H1 (cell line): ENCODE measurements at regions of chr6 and their contacts with region 1.

Region 1: DNA sequence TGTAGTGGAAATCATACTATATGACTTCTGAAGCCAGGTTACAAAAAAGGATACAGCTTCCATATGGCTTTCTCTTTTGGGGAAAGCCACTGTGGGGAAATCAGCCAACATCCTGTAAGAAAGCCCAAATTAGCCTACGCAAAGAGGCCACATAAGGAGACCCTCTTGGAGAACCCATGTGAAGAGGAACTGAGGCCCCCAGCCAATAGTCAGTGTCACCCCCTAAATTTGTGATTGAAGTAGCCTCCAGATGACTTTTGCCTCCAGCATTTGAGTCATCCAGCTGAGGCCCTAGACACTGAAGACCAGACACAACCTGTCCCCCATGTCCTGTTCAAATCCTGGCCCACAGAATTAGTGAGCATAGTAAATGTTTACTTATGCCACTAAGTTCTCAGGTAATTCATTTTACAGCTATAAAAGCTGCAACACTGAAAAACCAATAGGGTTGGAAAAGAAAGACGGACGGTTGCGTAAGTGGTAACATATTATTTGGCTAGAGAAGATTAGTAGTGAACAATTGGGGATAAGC is 60.4 kb downstream of the HMGCLL1 start:
- DNase-seq: no peak
- H3K4me3 ChIP-seq: no peak overlapping the region
- H3K27ac ChIP-seq: no peak overlapping the region
- H3K4me1 ChIP-seq: no peaks in the 10 kb centered on the region
- H3K27me3 ChIP-seq: no peaks in the 10 kb centered on the region
- CTCF ChIP-seq: no peak
- EP300 ChIP-seq: no peak
- POLR2A ChIP-seq: no peak
- RAD21 ChIP-seq: no peak

Region 2: DNA sequence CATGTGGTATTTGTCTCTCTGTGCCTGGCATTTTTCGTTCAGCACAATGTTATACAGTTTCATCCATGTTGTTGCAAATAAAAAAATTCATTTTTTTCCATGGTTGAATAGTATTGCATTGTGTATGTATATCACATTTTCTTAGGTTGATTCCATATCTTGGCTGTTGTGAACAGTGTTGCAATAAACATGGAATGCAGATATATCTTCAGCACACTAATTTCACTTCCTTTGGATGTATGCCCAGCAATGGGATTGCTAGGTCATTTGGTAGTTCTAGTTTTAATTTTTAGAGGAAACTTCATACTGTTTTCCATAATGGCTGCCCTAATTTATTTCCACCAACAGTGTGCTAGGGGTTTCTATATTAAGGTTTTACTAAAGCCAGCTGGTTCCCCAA is 138.7 kb before region 1 on chr6:
- CTCF ChIA-PET with region 1: no interaction called
- POLR2A ChIA-PET with region 1: no interaction called
- DNase-seq: no peak
- H3K4me3 ChIP-seq: no peak overlapping the region
- H3K27ac ChIP-seq: no peak overlapping the region
- H3K4me1 ChIP-seq: no peaks in the 10 kb centered on the region
- H3K27me3 ChIP-seq: no peaks in the 10 kb centered on the region
- CTCF ChIP-seq: no peak
- EP300 ChIP-seq: no peak
- POLR2A ChIP-seq: no peak
- RAD21 ChIP-seq: no peak

Region 3: GRCh38 chr6:55528621-55529020 is 10.0 kb after region 1 on chr6:
- CTCF ChIA-PET with region 1: interaction called, 20 read pairs
- POLR2A ChIA-PET with region 1: no interaction called
- DNase-seq: no peak
- H3K4me3 ChIP-seq: no peak overlapping the region
- H3K27ac ChIP-seq: no peak overlapping the region
- H3K4me1 ChIP-seq: no peaks in the 10 kb centered on the region
- H3K27me3 ChIP-seq: no peaks in the 10 kb centered on the region
- CTCF ChIP-seq: peak in 2 of 3 experiments; percentile 40 to 66; a peak in 2 of 4 replicates
- EP300 ChIP-seq: no peak
- POLR2A ChIP-seq: no peak
- RAD21 ChIP-seq: peak; percentile 26 to 46; a peak in 3 of 4 replicates